ENCODE measurements at regions of chr22 and their contacts with region 1.

Region 1: DNA sequence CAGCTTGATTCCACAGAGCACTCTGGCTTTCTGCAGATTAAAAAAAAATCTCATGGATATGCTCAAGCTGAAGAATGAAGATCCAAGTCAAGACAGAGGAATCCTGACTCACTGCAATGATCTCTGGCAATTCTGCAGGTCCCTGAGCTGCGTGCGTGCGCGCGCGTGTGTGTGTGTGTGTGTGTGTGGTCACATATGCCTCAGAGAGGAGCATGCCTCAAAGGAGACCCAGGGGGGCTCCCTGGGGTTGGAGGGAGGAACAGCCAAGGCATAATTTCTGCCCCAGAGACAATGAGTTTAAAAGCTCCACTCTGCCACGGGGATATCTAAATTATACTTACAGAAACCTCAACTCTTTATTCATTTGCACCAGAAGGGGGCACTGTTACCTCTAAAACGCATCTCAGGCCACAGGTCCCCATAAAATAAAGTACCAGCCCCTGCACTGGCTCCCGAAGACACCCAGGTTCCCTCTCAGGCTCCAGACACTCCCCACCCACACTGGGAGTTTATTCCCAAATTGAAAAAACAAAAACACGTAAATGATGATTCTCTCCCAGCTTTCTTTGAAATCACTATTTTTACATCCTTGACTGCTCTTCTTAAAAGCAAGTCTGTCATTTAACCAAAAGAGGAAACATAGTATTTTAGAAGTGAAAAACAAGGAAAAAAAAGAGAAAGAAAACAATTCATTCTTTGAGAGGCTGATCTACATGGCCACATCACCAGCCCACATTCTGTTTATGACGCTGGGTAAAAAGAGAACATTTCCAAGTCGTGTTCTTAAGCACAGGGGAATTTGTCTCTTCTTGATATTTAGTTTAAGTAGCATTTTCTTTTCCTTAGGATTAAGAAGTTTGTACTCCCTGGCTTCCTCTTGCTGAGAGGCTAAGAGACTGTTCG is 401.0 kb downstream of the LARGE1 start:
- DNase-seq: peak; percentile 17
- ATAC-seq: no peak
- H3K4me3 Mint-ChIP-seq: no peak overlapping the region
- H3K27ac Mint-ChIP-seq: no peak overlapping the region
- H3K4me1 Mint-ChIP-seq: no peaks in the 10 kb centered on the region
- H3K27me3 Mint-ChIP-seq: peaks cover 2% of the 10 kb centered on the region

Region 2: GRCh38 chr22:33565580-33565995 is 46.3 kb after region 1 on chr22:
- CTCF ChIA-PET with region 1: no interaction called
- POLR2A ChIA-PET with region 1: no interaction called
- intact Hi-C with region 1: no loop called
- DNase-seq: peak; percentile 10
- ATAC-seq: peak; percentile 73
- H3K4me3 Mint-ChIP-seq: no peak overlapping the region
- H3K27ac Mint-ChIP-seq: no peak overlapping the region
- H3K4me1 Mint-ChIP-seq: peaks cover 7% of the 10 kb centered on the region
- H3K27me3 Mint-ChIP-seq: no peaks in the 10 kb centered on the region

Region 3: GRCh38 chr22:33579448-33580093 is 60.2 kb after region 1 on chr22:
- CTCF ChIA-PET with region 1: interaction called, 3 read pairs
- POLR2A ChIA-PET with region 1: no interaction called
- intact Hi-C with region 1: loop called (anchors 1 to 2 kb)
- DNase-seq: peak; percentile 59
- ATAC-seq: no peak
- H3K4me3 Mint-ChIP-seq: no peak overlapping the region
- H3K27ac Mint-ChIP-seq: no peak overlapping the region
- H3K4me1 Mint-ChIP-seq: no peaks in the 10 kb centered on the region
- H3K27me3 Mint-ChIP-seq: no peaks in the 10 kb centered on the region

Region 4: GRCh38 chr22:35023692-35024363 is 1504.5 kb after region 1 on chr22:
- CTCF ChIA-PET with region 1: interaction called, 3 read pairs
- POLR2A ChIA-PET with region 1: no interaction called
- intact Hi-C with region 1: loop called in 1 of 2 experiments (anchors 10 kb)
- DNase-seq: peak; percentile 87
- ATAC-seq: no peak
- H3K4me3 Mint-ChIP-seq: no peak overlapping the region
- H3K27ac Mint-ChIP-seq: no peak overlapping the region
- H3K4me1 Mint-ChIP-seq: no peaks in the 10 kb centered on the region
- H3K27me3 Mint-ChIP-seq: peaks cover 25% of the 10 kb centered on the region